Sciatic nerve (tissue), 2 donors: ENCODE measurements at regions of chr12 and their contacts with region 1.

Region 1: GRCh38 chr12:52879394-52880351 is 25.2 kb downstream of the KRT8 start:
- DNase-seq: peak; percentile 85
- ATAC-seq: peak; percentile 90

Region 2: GRCh38 chr12:52372216-52373154 is 507.2 kb before region 1 on chr12:
- intact Hi-C with region 1: loop called (anchors 10 kb)
- DNase-seq: peak; percentile 90
- ATAC-seq: peak; percentile 90

Region 3: GRCh38 chr12:52582971-52583456 is 296.7 kb before region 1 on chr12:
- intact Hi-C with region 1: loop called (anchors 5 kb)
- DNase-seq: peak; percentile 67
- ATAC-seq: peak; percentile 82

Region 4: GRCh38 chr12:54611715-54612149 is 1732.1 kb after region 1 on chr12:
- intact Hi-C with region 1: no loop called
- DNase-seq: no peak
- ATAC-seq: no peak